ENCODE measurements at regions of chr1 and their contacts with region 1.

Region 1: DNA sequence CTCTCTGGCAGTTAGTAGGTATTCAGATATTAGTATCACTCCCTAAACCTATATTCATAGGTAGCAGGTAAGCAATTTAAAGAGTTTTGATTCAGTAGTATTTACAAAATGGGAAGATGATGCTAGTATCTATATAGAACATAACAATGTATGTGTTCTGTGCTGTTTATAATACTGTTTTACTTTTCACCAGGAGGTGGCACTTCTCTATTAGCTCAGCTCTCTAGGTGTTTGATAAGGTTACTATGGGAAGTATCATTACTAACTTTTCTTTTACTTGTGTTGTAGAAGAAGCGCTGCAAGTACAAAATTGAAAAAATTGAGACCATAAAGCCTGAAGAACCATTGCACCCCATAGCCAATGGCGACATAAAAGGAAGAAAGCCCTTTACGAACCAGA is 49.4 kb upstream of the FASLG start:
- DNase-seq: peak; percentile 29 to 55 (median 54)
- H3K4me3 ChIP-seq: no peak overlapping the region
- H3K27ac ChIP-seq: no peak overlapping the region
- H3K4me1 ChIP-seq: no peaks in the 10 kb centered on the region
- H3K27me3 ChIP-seq: no peaks in the 10 kb centered on the region

Region 2: GRCh38 chr1:172719694-172720138 is 110.2 kb after region 1 on chr1:
- CTCF ChIA-PET with region 1: interaction called, 128 read pairs
- POLR2A ChIA-PET with region 1: interaction called, 5 read pairs
- DNase-seq: peak; percentile 56 to 74 (median 66)
- H3K4me3 ChIP-seq: no peak overlapping the region
- H3K27ac ChIP-seq: no peak overlapping the region
- H3K4me1 ChIP-seq: peaks cover 0 to 19% (median 7%) of the 10 kb centered on the region in 4 experiments
- H3K27me3 ChIP-seq: no peaks in the 10 kb centered on the region

Region 3: DNA sequence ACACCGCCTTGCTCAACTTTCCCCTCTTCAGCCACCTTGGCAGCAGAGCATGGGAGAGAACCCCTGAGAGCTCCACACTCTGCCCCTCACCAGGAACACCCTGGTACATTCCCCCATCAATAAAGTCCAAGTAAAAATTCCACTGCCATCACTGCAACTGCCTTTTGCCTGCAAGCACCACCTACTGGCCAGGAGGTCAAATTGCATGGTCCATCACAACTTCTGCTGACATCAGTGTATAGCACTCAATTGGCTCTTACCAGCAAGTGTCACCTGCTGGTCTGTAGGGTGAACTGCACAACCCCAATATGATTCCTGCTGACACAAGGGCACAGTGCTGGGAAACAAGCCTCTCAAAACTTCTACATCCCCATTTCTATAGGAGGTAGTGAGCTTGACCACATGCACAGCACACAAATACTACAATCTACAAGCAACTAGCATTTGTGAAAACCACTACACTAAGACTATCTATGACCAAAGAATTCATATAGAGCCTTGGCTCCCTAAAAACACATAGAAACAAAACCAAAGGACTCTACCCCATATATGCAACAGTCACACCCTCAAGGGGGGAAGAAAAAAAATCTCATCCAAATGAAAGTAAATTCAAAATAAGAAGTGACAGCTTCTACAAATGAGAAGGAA is 118.6 kb after region 1 on chr1:
- CTCF ChIA-PET with region 1: interaction called, 128 read pairs
- POLR2A ChIA-PET with region 1: no interaction called
- DNase-seq: peak; percentile 50 to 80 (median 68)
- H3K4me3 ChIP-seq: no peak overlapping the region
- H3K27ac ChIP-seq: no peak overlapping the region
- H3K4me1 ChIP-seq: peaks cover 0 to 22% (median 18%) of the 10 kb centered on the region in 4 experiments
- H3K27me3 ChIP-seq: no peaks in the 10 kb centered on the region